H1 (cell line): ENCODE measurements at regions of chr2 and their contacts with region 1.

Region 1: DNA sequence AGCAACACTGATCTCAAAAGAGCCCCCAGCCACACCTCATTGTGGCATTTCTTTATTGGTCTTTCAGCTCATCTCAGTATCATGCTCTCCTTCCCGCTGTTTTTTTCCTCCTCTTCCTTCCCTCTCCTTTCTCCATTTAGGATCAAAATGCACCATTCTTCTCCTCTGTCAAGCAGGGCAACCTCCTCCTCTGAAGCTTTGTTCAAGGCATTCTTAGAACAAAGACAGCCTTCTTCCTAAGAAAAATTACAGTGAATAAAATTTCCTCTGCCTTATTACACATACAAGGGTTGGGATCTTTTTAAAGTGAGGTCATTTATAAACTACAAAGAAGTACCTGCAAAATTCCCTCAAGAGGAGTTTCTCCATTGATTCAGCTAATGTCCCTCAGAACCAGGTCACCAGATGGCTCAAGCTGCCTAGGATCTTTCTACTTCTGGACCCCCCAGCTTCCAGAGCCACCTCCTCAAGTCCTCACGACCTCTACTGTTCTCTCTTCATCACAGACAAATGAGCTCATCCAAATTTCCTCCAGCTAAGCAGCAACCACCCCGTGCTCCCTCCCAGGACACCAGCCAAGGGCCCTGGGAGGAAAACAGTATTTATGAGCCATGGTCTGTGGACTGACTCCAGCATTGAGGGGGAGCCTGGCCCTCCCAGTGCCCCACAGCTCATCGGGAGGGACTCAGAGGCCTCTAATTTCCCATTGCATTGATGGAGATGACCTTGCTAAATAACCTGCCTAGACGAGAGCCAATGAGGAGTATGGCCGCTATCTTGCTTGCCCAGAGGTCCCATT is 18.0 kb downstream of the SFXN5 start:
- DNase-seq: no peak
- H3K4me3 ChIP-seq: no peak overlapping the region
- H3K27ac ChIP-seq: no peak overlapping the region
- H3K4me1 ChIP-seq: peaks cover 0 to 7% (median 3%) of the 10 kb centered on the region in 4 experiments; a peak in 4 of 7 replicates
- H3K27me3 ChIP-seq: no peaks in the 10 kb centered on the region
- CTCF ChIP-seq: no peak
- EP300 ChIP-seq: no peak
- POLR2A ChIP-seq: no peak
- RAD21 ChIP-seq: no peak

Region 2: DNA sequence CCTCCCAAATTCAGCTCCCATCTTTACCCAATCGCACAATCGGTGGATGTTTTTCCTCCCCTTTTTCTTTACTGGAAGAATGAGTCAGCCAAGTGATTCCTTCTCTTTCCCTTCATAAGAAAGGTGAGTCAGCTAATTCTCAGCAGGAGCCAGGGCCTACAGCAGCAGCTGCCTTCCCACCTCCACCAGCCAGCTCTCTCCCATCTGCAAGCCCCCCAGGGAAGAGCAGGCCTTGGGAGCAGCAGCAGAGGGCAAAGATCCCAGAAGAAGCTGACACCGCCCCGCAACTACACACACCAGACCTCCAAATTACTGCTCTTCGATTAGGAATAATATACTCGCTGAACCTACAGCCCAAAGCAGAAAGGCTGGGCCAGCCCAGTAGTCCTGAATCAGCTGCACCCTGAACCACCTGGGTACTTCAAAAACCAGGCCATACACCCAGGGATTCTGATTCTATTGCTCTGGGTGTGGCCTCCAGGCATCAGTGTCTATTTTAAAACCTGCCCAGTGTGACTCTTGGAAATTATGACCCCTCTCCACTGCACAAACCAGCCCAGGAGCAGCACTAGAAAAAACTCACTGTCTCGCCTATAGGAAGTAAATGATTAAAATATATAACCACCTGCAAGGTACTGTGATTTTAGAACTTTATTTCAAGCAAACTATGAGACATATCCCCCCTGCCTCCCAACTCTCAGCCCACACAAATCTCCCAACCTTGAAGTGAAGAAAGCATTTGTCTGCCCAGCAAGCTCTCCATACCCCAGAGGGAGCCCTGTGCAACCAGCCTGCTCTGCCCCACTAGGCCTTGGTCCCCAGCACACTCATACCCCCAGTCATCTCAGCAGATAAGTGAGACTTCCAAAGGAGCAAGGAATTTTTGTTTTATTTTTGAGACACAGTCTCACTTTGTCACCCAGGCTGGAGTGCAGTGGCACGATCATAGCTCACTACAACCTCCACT is 10.7 kb after region 1 on chr2:
- CTCF ChIA-PET with region 1: interaction called, 14 read pairs
- POLR2A ChIA-PET with region 1: interaction called, 5 read pairs
- DNase-seq: peak in 1 of 2 experiments; percentile 63
- H3K4me3 ChIP-seq: peak overlapping the region in 1 of 4 experiments; percentile 9; a peak in 1 of 8 replicates
- H3K27ac ChIP-seq: peak overlapping the region; percentile 46; the same call in 1 of the 2 replicates
- H3K4me1 ChIP-seq: peaks cover 6 to 13% (median 11%) of the 10 kb centered on the region in 4 experiments
- H3K27me3 ChIP-seq: no peaks in the 10 kb centered on the region
- CTCF ChIP-seq: no peak
- EP300 ChIP-seq: no peak
- POLR2A ChIP-seq: no peak
- RAD21 ChIP-seq: no peak

Region 3: DNA sequence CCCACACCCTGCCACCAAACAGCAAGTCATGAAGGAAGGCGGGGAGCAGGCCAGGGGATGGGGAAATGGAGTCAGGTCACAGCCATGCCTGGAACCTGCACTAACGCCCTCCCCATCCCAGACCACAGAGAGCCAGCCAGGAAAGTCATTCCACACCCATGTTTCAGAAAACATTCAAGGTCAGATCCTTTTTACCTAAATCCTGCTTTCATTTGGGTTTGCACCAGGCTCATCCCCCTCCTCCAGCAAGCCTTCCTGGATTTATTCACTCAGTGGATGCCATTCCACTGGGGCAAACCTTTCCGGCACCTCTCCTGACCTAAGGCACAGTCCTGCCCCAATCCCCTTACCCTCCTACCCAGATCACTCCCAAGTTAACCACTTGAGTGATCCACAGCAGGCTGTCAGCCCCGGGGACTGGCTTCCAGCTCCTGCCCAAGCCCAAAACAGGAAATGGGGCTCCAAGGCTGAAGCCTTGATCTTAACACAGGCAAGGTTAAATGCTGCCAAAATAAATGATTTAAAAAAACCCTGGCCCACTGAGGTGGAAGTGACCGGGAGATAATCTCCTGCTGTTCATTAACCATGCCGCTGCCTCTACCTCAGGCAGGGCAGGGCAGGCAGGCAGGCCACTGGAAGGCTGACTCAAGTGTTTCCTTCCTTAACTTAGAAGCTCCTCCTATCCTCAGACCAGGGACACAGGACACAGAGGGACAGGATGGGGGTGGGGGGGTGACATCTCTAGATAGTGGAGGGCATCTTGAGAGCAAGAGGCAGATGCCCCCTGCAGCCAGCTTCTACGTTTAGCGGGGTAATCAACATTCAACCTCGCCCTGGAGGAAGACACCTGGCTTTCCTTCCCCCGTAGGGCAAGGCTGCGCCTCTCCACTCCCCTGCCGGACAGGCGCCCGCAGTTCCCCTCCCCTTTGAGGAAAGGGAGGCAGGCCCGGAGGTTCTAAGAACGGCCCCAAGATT is 57.8 kb after region 1 on chr2:
- CTCF ChIA-PET with region 1: no interaction called
- POLR2A ChIA-PET with region 1: no interaction called
- DNase-seq: peak in 1 of 2 experiments; percentile 72
- H3K4me3 ChIP-seq: peak overlapping the region; percentile 58 to 73 (median 63)
- H3K27ac ChIP-seq: no peak overlapping the region
- H3K4me1 ChIP-seq: peaks cover 10 to 14% (median 12%) of the 10 kb centered on the region in 4 experiments; a peak in 6 of 7 replicates
- H3K27me3 ChIP-seq: no peaks in the 10 kb centered on the region; a peak in 2 of 7 replicates
- CTCF ChIP-seq: no peak
- EP300 ChIP-seq: no peak
- POLR2A ChIP-seq: no peak
- RAD21 ChIP-seq: no peak; a peak in 1 of 4 replicates